Activated naive CD4-positive, alpha-beta T cell treated with anti-CD3 and anti-CD28 coated beads for 36 hours (primary cell): ENCODE measurements at regions of chr2 and their contacts with region 1.

Region 1: GRCh38 chr2:201151127-201151981 is 31.6 kb upstream of the CASP10 start:
- DNase-seq: no peak
- H3K4me3 Mint-ChIP-seq: no peak overlapping the region
- H3K27ac Mint-ChIP-seq: peak overlapping the region; percentile 83
- H3K4me1 Mint-ChIP-seq: peaks cover 38% of the 10 kb centered on the region
- H3K27me3 Mint-ChIP-seq: no peaks in the 10 kb centered on the region

Region 2: DNA sequence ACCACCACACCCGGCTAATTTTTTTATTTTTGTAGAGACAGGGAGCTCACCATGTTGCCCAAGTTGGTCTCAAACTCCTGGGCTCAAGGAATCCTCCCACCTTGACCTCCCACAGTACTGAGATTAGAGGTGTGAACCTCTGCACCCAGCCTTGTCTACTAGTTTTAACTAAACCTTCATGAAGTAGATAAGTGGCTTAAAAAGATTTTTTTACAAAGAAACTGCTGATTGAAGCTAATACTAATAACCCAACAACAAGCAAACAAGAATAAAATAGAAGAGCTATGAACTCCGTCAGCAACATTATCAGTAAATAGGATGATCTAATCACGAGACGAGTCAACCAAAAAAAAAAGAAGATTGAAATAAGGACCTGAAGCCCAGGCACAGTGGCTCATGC is 60.8 kb before region 1 on chr2:
- CTCF ChIA-PET with region 1: no interaction called
- intact Hi-C with region 1: no loop called
- DNase-seq: no peak
- H3K4me3 Mint-ChIP-seq: no peak overlapping the region
- H3K27ac Mint-ChIP-seq: no peak overlapping the region
- H3K4me1 Mint-ChIP-seq: no peaks in the 10 kb centered on the region
- H3K27me3 Mint-ChIP-seq: no peaks in the 10 kb centered on the region

Region 3: GRCh38 chr2:201130524-201131186 is 20.7 kb before region 1 on chr2:
- CTCF ChIA-PET with region 1: interaction called, 4 read pairs
- intact Hi-C with region 1: loop called (anchors 1 kb)
- DNase-seq: peak; percentile 68
- H3K4me3 Mint-ChIP-seq: peak overlapping the region; percentile 76
- H3K27ac Mint-ChIP-seq: peak overlapping the region; percentile 96
- H3K4me1 Mint-ChIP-seq: peaks cover 56% of the 10 kb centered on the region
- H3K27me3 Mint-ChIP-seq: no peaks in the 10 kb centered on the region